Activated CD8-positive, alpha-beta T cell treated with anti-CD3 and anti-CD28 coated beads for 36 hours (primary cell): ENCODE measurements at regions of chr3 and their contacts with region 1.

Region 1: DNA sequence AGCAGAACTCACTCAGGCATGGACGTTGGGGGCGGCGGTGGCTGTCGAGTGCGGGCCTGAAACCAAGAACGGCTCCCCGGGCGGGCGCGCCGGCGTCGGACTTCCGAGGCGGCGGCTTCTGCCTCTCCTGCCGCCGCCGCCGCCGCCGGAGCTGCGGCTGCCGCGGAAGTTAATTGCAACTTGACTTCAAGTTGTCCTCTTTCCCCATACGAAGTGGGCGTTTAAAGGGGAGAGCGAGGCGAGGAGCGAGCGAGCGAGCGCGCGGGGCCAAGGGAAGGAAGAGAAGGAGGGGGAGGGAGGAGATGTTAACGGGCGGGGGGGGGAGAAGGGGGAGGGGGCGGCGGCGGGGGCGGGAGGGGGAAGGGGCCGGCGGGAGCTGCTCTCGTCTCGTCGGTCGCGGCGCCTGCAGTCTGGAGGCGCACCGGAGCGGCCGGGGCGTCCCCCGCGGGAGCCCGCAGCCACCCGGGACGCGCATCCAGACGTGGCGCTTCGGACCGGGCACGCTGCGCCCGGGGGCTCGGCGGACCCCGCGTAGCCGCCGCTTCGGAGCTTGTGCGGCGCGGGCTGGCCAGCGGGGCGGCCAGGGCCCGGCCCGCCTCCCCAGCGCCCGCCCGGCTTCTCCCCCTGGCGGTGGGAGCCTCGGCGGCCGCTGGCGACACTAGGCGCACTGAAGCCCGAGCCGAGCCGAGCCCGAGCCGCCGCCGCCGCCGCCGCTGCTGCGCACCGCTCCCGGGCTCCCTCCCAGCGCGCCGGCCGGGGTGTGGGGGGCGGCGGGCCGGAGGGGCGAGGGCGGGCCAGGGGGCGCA is 19.7 kb upstream of the SATB1 start:
- DNase-seq: peak; percentile 83
- ATAC-seq: peak; percentile 75
- H3K4me3 Mint-ChIP-seq: peak overlapping the region; percentile 99
- H3K27ac Mint-ChIP-seq: peak overlapping the region; percentile 97
- H3K4me1 Mint-ChIP-seq: peaks cover 33% of the 10 kb centered on the region
- H3K27me3 Mint-ChIP-seq: no peaks in the 10 kb centered on the region
- CTCF ChIP-seq: no peak

Region 2: GRCh38 chr3:18419232-18419631 is 25.6 kb before region 1 on chr3:
- CTCF ChIA-PET with region 1: no interaction called
- POLR2A ChIA-PET with region 1: interaction called, 80 read pairs
- intact Hi-C with region 1: loop called (anchors 2 kb)
- DNase-seq: no peak
- ATAC-seq: no peak
- H3K4me3 Mint-ChIP-seq: peak overlapping the region; percentile 64
- H3K27ac Mint-ChIP-seq: peak overlapping the region; percentile 79
- H3K4me1 Mint-ChIP-seq: peaks cover 86% of the 10 kb centered on the region
- H3K27me3 Mint-ChIP-seq: no peaks in the 10 kb centered on the region
- CTCF ChIP-seq: no peak

Region 3: DNA sequence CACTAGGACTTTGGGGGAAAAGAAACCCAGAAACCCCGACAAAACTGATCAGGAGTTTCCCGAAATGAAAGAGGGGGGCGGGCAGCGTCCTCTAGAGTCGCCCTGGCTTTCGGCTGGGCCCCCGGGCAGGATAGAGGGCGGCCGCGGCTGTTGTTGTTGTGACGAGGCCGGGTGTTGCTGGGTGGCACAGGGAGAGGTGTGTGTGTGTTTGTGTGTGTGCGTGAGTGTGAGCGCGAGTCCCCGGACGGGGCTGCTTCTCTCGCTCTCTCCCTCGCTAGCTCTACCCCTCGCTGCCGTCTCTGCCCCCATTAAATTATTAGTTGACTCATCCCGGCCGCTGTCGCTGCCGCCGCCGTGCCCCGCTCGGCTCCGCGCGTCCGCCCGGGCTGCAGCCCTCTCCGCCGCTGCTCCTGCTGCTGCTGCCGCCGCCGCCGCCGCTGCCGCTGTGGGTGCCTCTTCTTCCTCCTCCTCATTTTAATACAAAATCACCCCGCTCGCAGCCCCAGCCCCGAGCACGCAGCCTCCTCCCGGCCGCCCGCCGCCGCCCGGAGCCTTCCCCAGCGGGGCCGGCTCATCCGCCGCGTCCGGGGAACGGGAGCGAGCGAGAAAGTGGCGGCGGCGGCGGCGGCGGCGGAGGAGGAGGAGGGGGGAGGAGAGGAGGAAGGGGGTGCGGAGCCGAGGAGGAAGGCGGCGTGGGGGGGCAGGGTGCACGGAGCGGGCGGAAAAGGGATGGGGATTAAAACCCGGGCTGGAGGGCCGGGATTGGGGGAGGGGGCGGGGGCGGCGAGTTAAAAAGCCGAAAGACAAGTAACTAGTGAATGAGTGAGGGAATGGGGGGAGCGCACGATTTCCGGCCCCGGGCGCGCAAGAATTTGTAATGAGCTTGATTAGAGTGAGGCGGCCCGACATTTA is 19.8 kb before region 1 on chr3 and contains the start of gene SATB1:
- CTCF ChIA-PET with region 1: interaction called, 8 read pairs
- POLR2A ChIA-PET with region 1: interaction called, 271 read pairs
- intact Hi-C with region 1: loop called (anchors 2 kb)
- DNase-seq: peak; percentile 78
- ATAC-seq: peak; percentile 17
- H3K4me3 Mint-ChIP-seq: peak within 1 kb of the TSS; percentile 90
- H3K27ac Mint-ChIP-seq: peak within 1 kb of the TSS; percentile 97
- H3K4me1 Mint-ChIP-seq: peaks cover 68% of the 10 kb centered on the region
- H3K27me3 Mint-ChIP-seq: no peaks in the 10 kb centered on the region
- CTCF ChIP-seq: no peak
- total RNA-seq, gene SATB1: 208 to 213 TPM

Region 4: GRCh38 chr3:18649666-18650363 is 205.0 kb after region 1 on chr3:
- CTCF ChIA-PET with region 1: interaction called, 5 read pairs
- POLR2A ChIA-PET with region 1: interaction called, 26 read pairs
- intact Hi-C with region 1: loop called (anchors 5 kb)
- DNase-seq: peak; percentile 82
- ATAC-seq: peak; percentile 88
- H3K4me3 Mint-ChIP-seq: peak overlapping the region; percentile 6
- H3K27ac Mint-ChIP-seq: peak overlapping the region; percentile 94
- H3K4me1 Mint-ChIP-seq: peaks cover 72% of the 10 kb centered on the region
- H3K27me3 Mint-ChIP-seq: no peaks in the 10 kb centered on the region
- CTCF ChIP-seq: no peak

Region 5: DNA sequence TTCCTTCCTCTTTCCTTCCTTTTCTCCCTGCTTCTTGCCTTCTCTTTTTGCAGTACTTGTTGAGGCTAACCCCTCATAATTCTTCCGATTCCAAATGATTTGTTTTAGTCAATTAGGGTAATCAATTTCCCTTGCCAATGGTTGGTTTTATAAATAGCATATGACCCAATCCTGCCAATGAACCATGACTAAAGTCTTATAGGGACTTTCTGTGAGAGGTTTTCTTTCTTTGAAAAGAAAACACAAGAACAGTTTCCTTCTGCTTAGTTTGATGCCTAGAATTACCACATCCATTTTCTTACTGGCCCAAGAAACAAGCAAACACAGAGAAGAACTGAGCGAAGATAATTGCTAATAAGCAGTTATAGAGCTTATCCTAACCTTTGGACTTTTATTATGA is 272.8 kb after region 1 on chr3:
- CTCF ChIA-PET with region 1: no interaction called
- POLR2A ChIA-PET with region 1: interaction called, 13 read pairs
- intact Hi-C with region 1: no loop called
- DNase-seq: no peak
- ATAC-seq: peak; percentile 54
- H3K4me3 Mint-ChIP-seq: no peak overlapping the region
- H3K27ac Mint-ChIP-seq: peak overlapping the region; percentile 97
- H3K4me1 Mint-ChIP-seq: peaks cover 74% of the 10 kb centered on the region
- H3K27me3 Mint-ChIP-seq: no peaks in the 10 kb centered on the region
- CTCF ChIP-seq: no peak

Region 6: GRCh38 chr3:18747383-18747782 is 302.6 kb after region 1 on chr3:
- CTCF ChIA-PET with region 1: no interaction called
- POLR2A ChIA-PET with region 1: interaction called, 12 read pairs
- intact Hi-C with region 1: no loop called
- DNase-seq: no peak
- ATAC-seq: no peak
- H3K4me3 Mint-ChIP-seq: no peak overlapping the region
- H3K27ac Mint-ChIP-seq: no peak overlapping the region
- H3K4me1 Mint-ChIP-seq: peaks cover 82% of the 10 kb centered on the region
- H3K27me3 Mint-ChIP-seq: no peaks in the 10 kb centered on the region
- CTCF ChIP-seq: no peak